AG04450 (cell line): ENCODE measurements at regions of chr11 and their contacts with region 1.

Region 1: DNA sequence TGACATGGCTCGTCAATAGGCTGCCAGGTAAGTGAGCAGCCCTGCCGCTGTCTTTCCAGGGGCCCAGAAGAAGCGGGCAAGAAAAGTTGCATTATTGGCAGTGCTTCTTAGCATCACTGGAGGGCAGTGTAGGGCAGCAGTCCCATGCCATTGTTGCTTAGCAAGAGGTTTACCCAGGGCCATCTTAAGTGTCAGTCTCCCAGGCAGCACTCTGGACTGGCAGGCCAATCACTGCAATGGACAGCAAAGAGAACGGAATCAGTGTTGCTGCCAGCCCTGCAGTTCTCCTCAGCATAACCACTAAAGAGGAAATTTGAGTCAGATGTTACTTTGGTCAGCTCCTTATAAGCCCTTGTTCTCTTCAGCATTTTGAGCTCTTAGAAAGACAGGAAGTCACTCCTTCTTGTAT is 13.4 kb upstream of the GRK2 start:
- DNase-seq: no peak
- H3K4me3 ChIP-seq: no peak overlapping the region
- H3K27ac ChIP-seq: no peak overlapping the region
- H3K27me3 ChIP-seq: no peaks in the 10 kb centered on the region
- CTCF ChIP-seq: peak; percentile 41

Region 2: DNA sequence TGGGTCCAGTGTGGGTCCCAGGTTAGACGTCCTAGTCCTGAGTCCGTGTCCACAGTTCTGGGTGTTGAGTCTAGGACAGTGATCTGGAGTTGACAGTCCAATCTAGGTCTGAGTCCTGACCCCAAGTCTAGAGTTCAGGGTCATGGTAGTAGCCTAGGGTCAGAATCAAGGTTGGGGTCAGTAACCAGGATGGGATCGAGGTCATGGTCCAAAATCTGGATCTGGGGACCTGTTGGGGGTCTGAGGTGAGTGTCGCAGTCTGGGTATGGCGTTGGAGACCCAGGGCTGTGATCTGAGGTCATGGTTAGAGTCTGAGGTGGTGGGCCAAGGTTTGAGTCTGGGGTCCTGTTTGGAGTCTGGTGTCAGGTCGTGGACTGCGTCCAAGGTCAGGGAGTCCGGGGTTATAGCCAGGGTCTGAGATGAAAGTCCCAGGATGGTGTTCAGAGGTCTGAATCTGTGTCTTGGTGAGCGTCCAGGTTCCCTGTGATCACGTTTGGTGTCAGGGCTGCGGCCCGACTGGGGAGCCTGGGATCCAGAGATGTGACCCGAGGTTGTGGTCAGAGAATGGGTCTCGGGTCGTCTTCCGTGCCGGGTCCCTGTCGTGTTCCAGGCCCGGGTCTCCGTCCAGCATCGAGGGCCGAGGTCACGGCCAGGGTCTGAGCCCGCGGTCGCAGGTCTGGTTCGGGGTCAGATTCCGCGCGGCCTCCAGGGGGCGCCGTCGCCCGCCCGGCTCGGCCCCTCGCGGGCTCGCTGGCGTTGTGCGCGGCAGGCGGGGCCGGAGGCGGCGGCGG is 13.0 kb after region 1 on chr11:
- CTCF ChIA-PET with region 1: interaction called, 30 read pairs
- POLR2A ChIA-PET with region 1: interaction called, 3 read pairs
- DNase-seq: no peak
- H3K4me3 ChIP-seq: peak overlapping the region; percentile 54
- H3K27ac ChIP-seq: no peak overlapping the region
- H3K27me3 ChIP-seq: no peaks in the 10 kb centered on the region
- CTCF ChIP-seq: peak; percentile 62